Caco-2 (cell line): ENCODE measurements at regions of chr12 and their contacts with region 1.

Region 1: GRCh38 chr12:17215759-17216570 is 610.0 kb upstream of the LMO3 start:
- DNase-seq: peak in 1 of 2 experiments; percentile 25
- H3K4me3 ChIP-seq: no peak overlapping the region
- H3K4me3 Mint-ChIP-seq: no peak overlapping the region
- H3K27ac Mint-ChIP-seq: no peak overlapping the region
- H3K4me1 ChIP-seq: no peaks in the 10 kb centered on the region
- H3K4me1 Mint-ChIP-seq: no peaks in the 10 kb centered on the region
- H3K27me3 ChIP-seq: no peaks in the 10 kb centered on the region
- H3K27me3 Mint-ChIP-seq: peaks cover 6% of the 10 kb centered on the region
- CTCF ChIP-seq: peak; percentile 16 to 19

Region 2: DNA sequence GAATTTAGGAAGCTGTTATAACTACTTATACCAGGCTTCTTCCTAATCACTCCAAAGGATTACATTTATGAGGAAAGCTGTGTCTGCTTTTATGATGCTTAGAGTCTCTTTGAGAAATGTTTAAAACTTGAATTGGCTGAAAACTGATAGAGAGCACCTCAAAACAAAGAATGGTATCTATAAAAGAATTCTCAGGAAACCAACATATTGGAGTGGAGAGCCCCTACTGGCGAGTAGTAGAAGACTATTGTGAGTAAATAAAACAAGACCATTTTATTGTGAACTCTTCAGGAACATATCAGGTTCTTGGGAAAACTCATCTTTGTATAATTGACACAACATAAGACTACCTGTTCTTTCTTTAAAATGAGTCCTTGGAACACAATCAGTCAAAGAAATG is 295.4 kb after region 1 on chr12:
- CTCF ChIA-PET with region 1: no interaction called
- POLR2A ChIA-PET with region 1: no interaction called
- intact Hi-C with region 1: loop called (anchors 5 kb)
- DNase-seq: no peak
- H3K4me3 ChIP-seq: no peak overlapping the region
- H3K4me3 Mint-ChIP-seq: no peak overlapping the region
- H3K27ac Mint-ChIP-seq: no peak overlapping the region
- H3K4me1 ChIP-seq: no peaks in the 10 kb centered on the region
- H3K4me1 Mint-ChIP-seq: no peaks in the 10 kb centered on the region
- H3K27me3 ChIP-seq: no peaks in the 10 kb centered on the region
- H3K27me3 Mint-ChIP-seq: peaks cover 13% of the 10 kb centered on the region
- CTCF ChIP-seq: peak; percentile 30 to 41

Region 3: DNA sequence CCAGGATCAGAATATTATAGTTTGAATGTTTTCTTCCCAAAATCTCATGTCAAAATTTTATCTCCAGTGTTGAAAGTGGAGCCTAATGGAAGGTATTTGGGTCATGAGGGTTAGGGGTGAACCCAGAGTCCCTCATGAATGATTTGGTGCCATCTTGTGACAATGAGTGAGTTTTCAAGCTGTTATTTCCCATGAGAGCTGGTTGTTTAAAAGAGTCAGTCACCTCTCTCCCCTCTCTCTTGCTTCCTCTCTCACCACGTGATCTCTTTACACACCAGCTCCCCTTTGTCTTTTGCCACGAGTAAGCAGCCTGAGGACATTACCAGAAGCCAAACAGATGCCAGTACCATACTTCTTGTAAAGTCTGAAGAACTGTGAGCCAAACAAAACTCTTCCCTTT is 312.4 kb after region 1 on chr12:
- CTCF ChIA-PET with region 1: no interaction called
- POLR2A ChIA-PET with region 1: no interaction called
- intact Hi-C with region 1: loop called (anchors 5 kb)
- DNase-seq: no peak
- H3K4me3 ChIP-seq: no peak overlapping the region
- H3K4me3 Mint-ChIP-seq: no peak overlapping the region
- H3K27ac Mint-ChIP-seq: no peak overlapping the region
- H3K4me1 ChIP-seq: no peaks in the 10 kb centered on the region
- H3K4me1 Mint-ChIP-seq: no peaks in the 10 kb centered on the region
- H3K27me3 ChIP-seq: no peaks in the 10 kb centered on the region
- H3K27me3 Mint-ChIP-seq: peaks cover under 1% of the 10 kb centered on the region
- CTCF ChIP-seq: no peak

Region 4: DNA sequence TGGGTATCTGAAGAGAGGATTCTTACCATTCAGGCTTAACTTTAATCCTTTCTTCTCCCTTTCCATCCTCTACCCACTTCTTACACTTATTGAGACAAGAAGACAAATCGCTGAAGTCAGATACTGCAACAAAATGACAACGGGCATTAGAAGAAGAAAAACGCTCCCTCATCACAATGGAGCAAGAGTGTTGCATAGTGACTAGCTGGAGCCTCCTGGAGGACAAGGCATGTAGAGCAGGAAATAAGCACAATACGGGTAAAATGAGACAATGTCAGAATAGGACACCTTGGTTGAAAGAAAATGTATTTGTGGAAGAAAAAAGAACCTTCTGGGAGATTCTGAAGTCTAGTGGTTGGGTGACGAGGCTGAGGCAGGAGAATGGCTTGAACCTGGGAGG is 373.0 kb after region 1 on chr12:
- CTCF ChIA-PET with region 1: no interaction called
- POLR2A ChIA-PET with region 1: no interaction called
- intact Hi-C with region 1: loop called (anchors 2 kb)
- DNase-seq: peak; percentile 52 to 56
- H3K4me3 ChIP-seq: no peak overlapping the region
- H3K4me3 Mint-ChIP-seq: no peak overlapping the region
- H3K27ac Mint-ChIP-seq: no peak overlapping the region
- H3K4me1 ChIP-seq: no peaks in the 10 kb centered on the region
- H3K4me1 Mint-ChIP-seq: no peaks in the 10 kb centered on the region
- H3K27me3 ChIP-seq: no peaks in the 10 kb centered on the region
- H3K27me3 Mint-ChIP-seq: peaks cover 5% of the 10 kb centered on the region
- CTCF ChIP-seq: peak; percentile 77 to 81